ENCODE measurements at regions of chr9 and their contacts with region 1.

Region 1: GRCh38 chr9:37870799-37871176 is 33.1 kb downstream of the SLC25A51 start:
- DNase-seq: no peak
- H3K4me3 ChIP-seq: no peak overlapping the region
- CTCF ChIP-seq: no peak

Region 2: GRCh38 chr9:37800631-37801286 is 70.0 kb before region 1 on chr9 and contains the start of gene DCAF10:
- CTCF ChIA-PET with region 1: no interaction called
- POLR2A ChIA-PET with region 1: no interaction called
- DNase-seq: no peak
- H3K4me3 ChIP-seq: peak within 1 kb of the TSS; percentile 99
- CTCF ChIP-seq: peak; percentile 22

Region 3: DNA sequence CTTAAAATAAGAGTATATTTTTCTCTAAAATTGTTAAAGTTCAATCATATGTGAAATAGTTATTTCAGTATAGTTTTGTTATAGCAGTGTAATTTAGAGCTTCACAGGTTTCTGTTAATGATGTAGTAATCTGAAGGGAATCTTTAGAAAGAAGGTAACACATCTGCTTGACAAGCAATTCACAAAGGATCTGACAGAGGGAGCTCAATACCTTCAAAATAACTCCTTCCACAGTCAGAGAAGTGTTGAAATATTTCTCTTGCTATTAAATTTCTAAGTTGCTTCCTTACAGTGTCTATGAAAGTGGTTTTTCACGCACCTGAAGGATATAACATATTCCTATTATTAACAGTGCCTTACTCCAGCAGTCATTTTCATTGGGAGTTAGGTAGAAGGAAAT is 11.7 kb before region 1 on chr9:
- CTCF ChIA-PET with region 1: interaction called, 15 read pairs
- POLR2A ChIA-PET with region 1: no interaction called
- DNase-seq: no peak
- H3K4me3 ChIP-seq: no peak overlapping the region
- CTCF ChIP-seq: peak; percentile 6

Measured in AG04449 (cell line).